ENCODE measurements at regions of chr14 and their contacts with region 1.

Region 1: DNA sequence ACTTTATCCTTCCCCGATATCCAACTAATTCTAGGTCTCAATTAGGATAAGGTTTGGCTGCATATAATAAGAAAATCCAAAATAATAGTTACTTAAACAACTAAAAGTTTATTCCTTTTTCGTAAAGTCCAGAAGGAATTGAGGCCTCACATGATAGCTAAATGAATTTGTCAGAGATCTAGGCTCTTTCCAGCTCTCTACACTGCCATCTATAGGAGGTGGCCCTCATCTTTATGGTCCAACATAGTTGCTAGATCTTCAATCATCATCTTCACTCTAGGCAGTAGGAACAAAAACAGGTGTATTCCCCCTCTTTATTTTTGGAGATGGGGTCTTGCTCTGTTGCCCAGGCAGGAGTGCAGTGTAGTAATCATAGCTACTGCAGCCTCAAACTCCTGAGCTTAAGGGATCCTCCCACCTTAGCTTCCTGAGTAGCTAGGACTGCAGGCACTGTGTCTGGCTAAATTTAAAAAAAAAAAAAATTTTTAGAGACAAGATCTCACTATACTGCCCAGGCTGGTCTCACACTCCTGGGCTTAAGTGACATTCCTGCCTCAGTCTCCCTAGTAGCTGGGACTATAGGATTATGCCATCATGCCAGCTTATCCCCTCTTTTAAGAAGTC is 46.5 kb upstream of the SAV1 start:
- DNase-seq: no peak
- H3K4me3 ChIP-seq: no peak overlapping the region
- CTCF ChIP-seq: peak; percentile 63

Region 2: DNA sequence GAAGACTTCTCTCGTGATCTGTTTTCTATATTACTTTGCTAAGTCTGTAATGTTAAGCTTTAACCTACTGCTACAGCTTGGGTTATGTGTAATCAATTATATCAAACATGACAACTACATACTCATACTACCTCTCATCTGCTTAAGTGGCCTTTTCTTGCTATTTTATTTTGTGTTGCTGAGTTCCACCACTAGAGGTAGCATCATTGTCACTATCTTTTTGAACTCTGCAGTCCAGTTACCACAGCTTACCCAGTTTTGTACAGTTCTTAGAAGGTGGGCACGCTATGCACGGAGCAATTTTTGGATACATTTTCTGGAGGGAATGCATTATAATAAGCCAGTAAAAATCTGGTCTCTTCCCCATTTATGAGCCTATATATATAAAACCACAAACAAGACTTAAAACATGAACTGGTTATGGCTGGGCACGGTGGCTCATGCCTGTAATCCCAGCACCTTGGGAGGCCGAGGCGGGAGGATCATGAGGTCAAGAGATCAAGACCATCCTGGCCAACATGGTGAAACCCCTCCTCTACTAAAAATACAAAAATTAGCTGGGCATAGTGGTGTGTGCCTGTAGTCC is 94.9 kb before region 1 on chr14:
- CTCF ChIA-PET with region 1: interaction called, 17 read pairs
- POLR2A ChIA-PET with region 1: no interaction called
- DNase-seq: no peak
- H3K4me3 ChIP-seq: no peak overlapping the region
- CTCF ChIP-seq: peak; percentile 58

Region 3: DNA sequence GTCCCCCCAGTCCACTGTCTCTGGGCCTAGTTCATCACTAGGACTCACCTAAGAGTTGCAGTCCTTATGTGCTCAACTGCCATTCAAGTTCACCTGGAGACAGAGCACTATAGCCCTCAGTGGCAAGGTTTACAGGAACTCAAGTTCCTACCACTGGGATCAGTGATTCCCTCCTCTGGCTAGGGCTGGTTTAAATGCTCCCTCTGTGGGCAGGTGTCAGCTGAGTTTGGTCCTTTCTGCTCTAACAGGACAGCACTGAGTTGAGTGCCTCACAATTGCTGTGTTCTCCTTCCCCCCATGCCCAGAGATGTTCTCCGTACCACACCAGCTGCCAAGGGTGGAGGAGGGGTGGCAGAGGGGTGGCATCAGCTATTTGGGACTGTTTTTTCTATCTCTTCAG is 25.7 kb before region 1 on chr14:
- CTCF ChIA-PET with region 1: interaction called, 11 read pairs
- POLR2A ChIA-PET with region 1: no interaction called
- DNase-seq: no peak
- H3K4me3 ChIP-seq: no peak overlapping the region
- CTCF ChIP-seq: no peak

Region 4: DNA sequence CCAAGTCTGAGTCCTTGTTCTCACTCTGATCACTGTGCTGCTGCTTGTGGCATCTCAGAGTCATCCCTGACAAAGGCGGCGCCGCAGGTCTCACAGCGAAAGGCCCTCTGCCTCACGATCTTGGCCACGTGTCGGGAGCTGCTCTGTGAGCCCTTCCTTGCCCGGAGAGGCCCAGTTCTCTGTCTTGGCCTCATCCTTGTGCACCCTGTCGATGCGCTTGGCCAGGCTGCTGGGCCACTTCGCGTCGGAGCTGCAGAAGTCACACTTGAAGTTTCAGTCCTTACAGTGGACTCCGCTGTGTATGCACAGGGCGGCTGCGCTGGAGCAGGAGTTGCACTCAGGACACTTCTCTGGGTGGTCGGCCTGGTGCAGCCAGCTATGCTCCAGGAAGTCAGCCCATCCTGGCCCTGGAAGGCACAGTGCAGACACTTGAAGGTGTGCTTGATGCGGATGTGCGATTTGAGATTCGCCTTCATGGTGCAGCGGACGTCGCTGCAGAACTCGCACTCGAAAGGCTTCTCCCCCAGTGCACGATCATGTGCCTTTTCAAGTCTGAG is 10.0 kb before region 1 on chr14:
- CTCF ChIA-PET with region 1: interaction called, 17 read pairs
- POLR2A ChIA-PET with region 1: no interaction called
- DNase-seq: no peak
- H3K4me3 ChIP-seq: no peak overlapping the region
- CTCF ChIP-seq: no peak

Region 5: DNA sequence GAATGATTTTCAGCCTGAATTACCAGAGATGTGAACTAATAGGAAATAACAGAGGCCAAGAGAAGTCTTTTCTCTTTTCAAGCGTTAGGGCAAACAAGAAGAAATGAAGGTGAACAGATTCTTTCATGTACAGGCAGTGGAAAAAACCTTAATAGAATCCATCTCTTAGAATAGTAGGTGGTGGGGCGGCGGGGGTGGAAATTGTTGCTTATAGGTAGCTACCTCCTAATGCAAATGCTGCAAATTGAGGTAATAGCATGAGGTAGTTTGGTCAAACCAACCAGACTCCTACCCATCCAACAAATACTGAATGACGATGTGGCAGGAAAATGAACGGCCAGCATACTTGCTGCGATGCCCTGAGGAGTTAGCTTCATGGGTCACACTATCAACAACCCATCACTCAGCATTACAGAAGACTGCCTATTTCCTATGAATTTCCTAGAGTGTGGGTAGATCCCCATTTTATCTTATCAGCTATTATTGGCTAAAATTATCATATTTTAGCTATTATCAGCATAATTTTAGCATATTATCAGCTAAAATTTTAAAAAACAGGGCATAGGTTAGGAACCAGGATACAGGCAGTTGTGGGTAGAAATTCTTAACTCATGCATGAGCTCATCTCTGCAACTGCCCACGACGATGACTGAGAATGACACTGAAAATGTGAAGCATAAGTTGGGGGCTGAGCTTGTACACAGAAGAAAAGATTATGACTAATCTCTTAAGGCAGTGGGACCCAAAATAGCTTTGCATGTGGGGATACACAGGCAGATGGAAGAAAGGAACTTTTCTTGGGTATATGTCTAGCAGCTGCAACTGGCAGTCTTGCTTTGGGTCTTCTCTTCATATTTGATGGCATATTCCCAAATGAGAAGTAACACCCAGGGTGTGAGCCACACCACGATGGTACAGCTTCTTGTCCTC is 47.7 kb after region 1 on chr14:
- CTCF ChIA-PET with region 1: interaction called, 14 read pairs
- POLR2A ChIA-PET with region 1: interaction called, 4 read pairs
- DNase-seq: peak; percentile 64
- H3K4me3 ChIP-seq: no peak overlapping the region
- CTCF ChIP-seq: no peak